Colonic mucosa (tissue), 4 donors: ENCODE measurements at regions of chr3 and their contacts with region 1.

Region 1: GRCh38 chr3:136752422-136753325 is 496 bp upstream of the STAG1 start:
- DNase-seq: peak; percentile 99
- H3K4me3 ChIP-seq: peak overlapping the region; percentile 60
- H3K27ac ChIP-seq: peak overlapping the region; percentile 98
- H3K4me1 ChIP-seq: no peaks in the 10 kb centered on the region
- H3K27me3 ChIP-seq: no peaks in the 10 kb centered on the region
- CTCF ChIP-seq: no peak

Region 2: DNA sequence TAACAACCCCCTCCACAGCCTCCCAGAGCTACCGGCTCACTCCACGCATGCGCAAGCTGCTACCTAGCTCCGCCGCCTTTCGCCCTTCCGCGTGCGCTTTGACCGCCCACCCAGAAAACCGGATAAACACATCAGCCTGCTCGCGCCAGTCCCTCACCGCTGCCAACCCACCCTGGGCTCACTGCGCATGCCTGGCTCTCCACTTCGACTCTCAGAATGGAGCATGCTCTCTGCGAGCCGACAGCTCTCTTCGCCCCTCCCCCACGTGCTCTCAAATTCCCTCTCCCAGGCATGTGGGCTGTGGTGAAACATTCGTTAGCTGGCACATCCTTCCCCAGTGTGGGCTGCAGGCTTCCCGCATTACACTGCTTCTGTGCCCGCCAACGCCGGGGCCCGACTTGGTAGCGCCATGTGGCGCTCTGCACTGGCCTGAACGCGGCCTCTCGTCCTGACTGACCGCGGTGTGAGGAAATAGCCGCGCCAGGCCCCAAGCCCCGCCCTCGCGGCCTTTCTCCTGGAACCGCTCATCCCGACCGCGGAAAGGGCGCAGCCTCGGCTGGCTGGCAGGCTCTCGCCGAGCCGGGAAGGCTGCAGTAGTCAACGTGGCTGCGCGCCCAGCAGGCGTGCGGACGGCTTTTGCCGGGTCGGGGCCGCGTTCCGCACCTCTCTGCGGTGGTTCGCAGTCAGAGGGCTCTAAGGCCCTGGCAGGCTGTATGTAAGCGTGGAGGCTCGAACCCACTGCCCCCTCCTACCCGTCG is 556.1 kb before region 1 on chr3:
- intact Hi-C with region 1: loop called (anchors 5 kb)
- DNase-seq: peak; percentile 99
- H3K4me3 ChIP-seq: peak overlapping the region; percentile 72
- H3K27ac ChIP-seq: peak overlapping the region; percentile 98
- H3K4me1 ChIP-seq: peaks cover 7% of the 10 kb centered on the region
- H3K27me3 ChIP-seq: no peaks in the 10 kb centered on the region
- CTCF ChIP-seq: no peak

Region 3: DNA sequence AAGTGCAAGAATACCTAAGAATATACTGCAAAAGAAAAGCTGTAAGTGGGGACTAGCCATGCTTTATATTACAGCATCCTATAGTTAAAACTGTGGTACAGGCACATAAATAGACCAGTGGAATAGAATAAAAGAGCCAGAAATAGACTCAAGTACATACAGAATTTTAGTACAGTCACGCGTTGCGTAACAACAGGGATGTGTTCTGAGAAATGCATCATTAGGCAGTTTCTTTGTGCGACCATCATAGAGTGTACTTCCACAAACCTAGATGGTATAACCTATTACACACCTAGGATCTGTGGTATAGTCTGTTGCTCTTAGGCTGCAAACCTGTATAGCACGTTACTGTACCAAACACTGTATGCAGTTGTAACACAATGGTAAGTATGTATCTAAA is 440.7 kb before region 1 on chr3:
- intact Hi-C with region 1: loop called (anchors 2 kb)
- DNase-seq: no peak
- H3K4me3 ChIP-seq: no peak overlapping the region
- H3K27ac ChIP-seq: no peak overlapping the region
- H3K4me1 ChIP-seq: no peaks in the 10 kb centered on the region
- H3K27me3 ChIP-seq: no peaks in the 10 kb centered on the region
- CTCF ChIP-seq: no peak

Region 4: DNA sequence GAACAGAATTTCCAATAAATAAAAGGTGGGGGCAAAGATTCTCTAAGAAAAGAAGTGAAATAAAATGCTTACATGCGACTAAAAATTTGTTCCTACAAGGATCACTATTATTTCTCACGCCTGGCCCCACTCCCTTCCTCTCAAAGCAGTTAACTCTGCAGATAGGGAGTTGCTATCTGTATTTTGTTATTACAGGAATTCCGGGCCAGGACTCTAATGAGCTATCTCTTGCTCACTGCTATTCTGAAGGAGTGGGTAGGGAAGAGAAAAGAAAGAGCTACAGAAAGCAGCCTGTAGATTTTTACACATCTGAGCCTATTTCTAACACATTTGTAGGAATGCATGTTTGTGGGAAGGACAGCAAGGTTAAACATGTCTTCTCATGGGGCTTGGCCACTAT is 362.1 kb before region 1 on chr3:
- intact Hi-C with region 1: loop called (anchors 5 kb)
- DNase-seq: no peak
- H3K4me3 ChIP-seq: no peak overlapping the region
- H3K27ac ChIP-seq: no peak overlapping the region
- H3K4me1 ChIP-seq: no peaks in the 10 kb centered on the region
- H3K27me3 ChIP-seq: no peaks in the 10 kb centered on the region
- CTCF ChIP-seq: no peak

Region 5: GRCh38 chr3:136955813-136956212 is 203.1 kb after region 1 on chr3:
- intact Hi-C with region 1: no loop called
- DNase-seq: peak; percentile 69
- H3K4me3 ChIP-seq: no peak overlapping the region
- H3K27ac ChIP-seq: peak overlapping the region; percentile 79
- H3K4me1 ChIP-seq: peaks cover 11% of the 10 kb centered on the region
- H3K27me3 ChIP-seq: no peaks in the 10 kb centered on the region
- CTCF ChIP-seq: no peak

Region 6: GRCh38 chr3:137013955-137014688 is 261.4 kb after region 1 on chr3:
- intact Hi-C with region 1: loop called (anchors 2 kb)
- DNase-seq: peak; percentile 95
- H3K4me3 ChIP-seq: peak overlapping the region; percentile 42
- H3K27ac ChIP-seq: no peak overlapping the region
- H3K4me1 ChIP-seq: peaks cover 5% of the 10 kb centered on the region
- H3K27me3 ChIP-seq: no peaks in the 10 kb centered on the region
- CTCF ChIP-seq: peak; percentile 87